OCI-LY7 (cell line): ENCODE measurements at regions of chr11 and their contacts with region 1.

Region 1: DNA sequence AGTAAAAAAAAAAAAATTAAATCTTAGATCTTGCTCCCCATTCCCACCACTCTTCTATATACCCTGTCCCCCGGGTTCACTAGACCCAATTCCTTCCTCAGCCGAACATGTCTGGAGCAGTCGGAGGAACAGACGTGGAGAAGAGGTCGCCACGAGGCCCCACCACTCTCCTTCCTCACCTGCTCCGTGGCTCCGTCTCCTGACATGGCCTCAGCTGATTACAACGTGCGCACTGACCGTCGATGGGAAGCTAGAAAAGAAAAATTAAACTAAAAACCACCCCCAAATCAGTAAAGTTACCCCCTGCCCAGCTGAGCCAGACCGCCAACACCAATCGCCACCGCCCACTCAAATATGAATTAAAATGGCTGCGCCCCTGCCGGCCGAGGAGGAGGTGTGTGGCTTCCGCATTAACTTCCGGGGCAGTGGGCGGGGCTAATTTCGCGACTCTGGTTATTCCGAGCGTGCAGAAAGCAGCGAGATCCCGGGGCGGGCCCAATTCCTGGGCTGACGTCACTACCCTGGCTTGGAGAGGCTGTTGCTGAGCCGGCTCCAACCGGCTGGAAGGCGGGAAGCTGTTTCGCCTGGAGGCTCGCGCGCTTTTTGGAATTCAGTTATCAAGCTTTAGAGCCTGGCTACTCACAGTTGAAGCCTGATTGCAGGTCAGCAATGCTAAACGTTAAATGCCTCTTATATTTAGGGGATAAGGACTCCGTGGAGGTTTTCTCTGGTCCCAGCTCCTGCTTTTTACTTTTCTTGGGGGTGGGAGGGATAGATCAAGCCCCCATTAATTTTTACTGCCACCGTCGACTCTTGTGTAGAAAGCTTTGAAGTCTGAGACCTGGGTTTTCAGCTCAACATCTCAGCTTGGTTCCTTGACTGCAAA is at the start of gene CSTF3:
- DNase-seq: peak; percentile 94
- H3K4me3 ChIP-seq: peak within 1 kb of the TSS; percentile 86
- H3K27ac ChIP-seq: peak within 1 kb of the TSS; percentile 53
- H3K4me1 ChIP-seq: peaks cover 23% of the 10 kb centered on the region
- CTCF ChIP-seq: 0 out of 2 replicates have a peak, but pooled peaks have one; percentile 19
- total RNA-seq, gene CSTF3: 31.9 and 45.1 TPM in 2 replicates

Region 2: GRCh38 chr11:32583459-32584271 is 577.7 kb before region 1 on chr11 and contains the start of gene EIF3M:
- CTCF ChIA-PET with region 1: no interaction called
- POLR2A ChIA-PET with region 1: no interaction called
- intact Hi-C with region 1: loop called (anchors 10 kb)
- DNase-seq: peak; percentile 98
- H3K4me3 ChIP-seq: peak within 1 kb of the TSS; percentile 98
- H3K27ac ChIP-seq: peak within 1 kb of the TSS; percentile 72
- H3K4me1 ChIP-seq: peaks cover 32% of the 10 kb centered on the region
- CTCF ChIP-seq: no peak
- total RNA-seq, gene EIF3M: 377 and 385 TPM in 2 replicates

Region 3: GRCh38 chr11:32987851-32988250 is 173.5 kb before region 1 on chr11:
- CTCF ChIA-PET with region 1: no interaction called
- POLR2A ChIA-PET with region 1: no interaction called
- intact Hi-C with region 1: no loop called
- DNase-seq: no peak
- H3K4me3 ChIP-seq: no peak overlapping the region
- H3K27ac ChIP-seq: no peak overlapping the region
- H3K4me1 ChIP-seq: no peaks in the 10 kb centered on the region
- CTCF ChIP-seq: no peak

Region 4: DNA sequence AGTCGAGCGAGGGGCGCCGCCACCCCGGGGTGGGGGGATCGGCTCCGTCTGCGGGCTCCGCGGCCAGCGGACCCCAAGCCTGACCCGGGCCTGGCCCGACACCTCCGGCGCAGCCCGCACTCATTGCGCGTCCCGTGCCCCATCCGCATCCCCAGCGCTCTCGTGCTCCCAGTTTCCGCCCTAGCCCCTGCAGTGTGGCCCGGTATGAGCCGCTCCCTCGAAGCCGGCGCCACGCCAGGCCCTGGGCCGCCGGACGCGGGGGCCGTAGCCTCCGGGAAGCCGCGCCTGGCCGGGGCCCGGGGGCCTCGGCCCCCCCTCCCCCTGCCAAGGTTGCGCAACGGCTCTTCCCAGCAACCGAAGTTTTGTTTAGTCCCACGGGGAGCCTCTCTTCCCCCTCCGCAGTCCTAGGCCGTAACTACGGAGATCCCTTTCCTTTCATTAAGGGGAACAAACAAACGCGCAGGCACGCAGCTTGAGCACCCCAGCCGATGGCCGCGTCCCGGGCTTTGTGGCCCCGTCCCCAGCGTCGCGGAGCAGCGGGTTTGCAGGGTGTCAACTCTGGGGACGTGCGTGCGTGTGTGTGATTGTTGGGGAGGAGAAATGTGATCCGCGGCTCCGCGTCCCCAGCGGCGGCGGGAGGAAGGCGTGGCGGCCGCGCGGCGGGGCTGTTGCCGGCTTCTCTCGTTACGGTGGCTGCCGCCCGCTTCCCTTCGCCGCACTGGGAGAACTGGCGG is 96.7 kb after region 1 on chr11:
- CTCF ChIA-PET with region 1: no interaction called
- POLR2A ChIA-PET with region 1: no interaction called
- intact Hi-C with region 1: loop called (anchors 1 kb)
- DNase-seq: peak; percentile 84
- H3K4me3 ChIP-seq: peak overlapping the region; percentile 83
- H3K27ac ChIP-seq: peak overlapping the region; percentile 85
- H3K4me1 ChIP-seq: peaks cover 27% of the 10 kb centered on the region
- CTCF ChIP-seq: peak; percentile 43

Region 5: DNA sequence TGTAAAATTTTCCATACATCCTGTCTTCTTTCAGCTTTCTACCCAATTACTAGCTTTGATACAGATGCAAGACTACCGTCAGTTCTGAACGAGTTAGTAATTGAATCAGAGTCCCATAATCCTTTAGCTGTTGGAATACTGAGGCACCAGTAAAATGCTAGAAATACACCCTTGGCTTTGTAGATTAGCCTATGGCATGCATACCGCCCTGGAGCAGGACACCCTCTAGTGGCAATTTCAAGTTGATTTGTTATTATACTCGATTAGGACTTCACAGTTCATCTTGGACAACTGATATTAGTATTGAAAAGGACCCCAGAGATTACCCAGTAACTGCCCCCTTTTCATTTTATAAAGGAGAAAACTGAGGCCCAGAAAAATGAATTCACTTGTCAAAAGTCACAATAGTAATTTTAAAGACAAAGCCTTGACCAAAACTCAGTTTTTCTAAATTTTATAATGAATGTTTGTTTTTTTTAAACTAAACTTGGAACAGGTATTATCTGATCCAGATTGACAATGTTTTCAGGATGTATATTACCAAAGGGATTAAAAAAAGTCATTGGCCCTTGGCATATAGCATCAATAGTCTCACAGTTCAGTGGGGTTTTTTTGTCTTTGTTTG is 168.5 kb after region 1 on chr11:
- CTCF ChIA-PET with region 1: interaction called, 3 read pairs
- POLR2A ChIA-PET with region 1: no interaction called
- intact Hi-C with region 1: loop called (anchors 1 kb)
- DNase-seq: peak; percentile 72
- H3K4me3 ChIP-seq: no peak overlapping the region
- H3K27ac ChIP-seq: no peak overlapping the region
- H3K4me1 ChIP-seq: no peaks in the 10 kb centered on the region
- CTCF ChIP-seq: peak; percentile 95

Region 6: GRCh38 chr11:33542921-33543320 is 381.6 kb after region 1 on chr11:
- CTCF ChIA-PET with region 1: no interaction called
- POLR2A ChIA-PET with region 1: no interaction called
- intact Hi-C with region 1: loop called (anchors 10 kb)
- DNase-seq: peak; percentile 51
- H3K4me3 ChIP-seq: no peak overlapping the region
- H3K27ac ChIP-seq: no peak overlapping the region
- H3K4me1 ChIP-seq: peaks cover 42% of the 10 kb centered on the region
- CTCF ChIP-seq: peak; percentile 82

Region 7: GRCh38 chr11:33687733-33688479 is 526.5 kb after region 1 on chr11:
- CTCF ChIA-PET with region 1: no interaction called
- POLR2A ChIA-PET with region 1: interaction called, 3 read pairs
- intact Hi-C with region 1: loop called (anchors 2 kb)
- DNase-seq: peak; percentile 74
- H3K4me3 ChIP-seq: no peak overlapping the region
- H3K27ac ChIP-seq: no peak overlapping the region
- H3K4me1 ChIP-seq: peaks cover 4% of the 10 kb centered on the region
- CTCF ChIP-seq: peak; percentile 97

Region 8: GRCh38 chr11:33736148-33736809 is 574.9 kb after region 1 on chr11 and contains the start of gene CD59:
- CTCF ChIA-PET with region 1: no interaction called
- POLR2A ChIA-PET with region 1: interaction called, 3 read pairs
- intact Hi-C with region 1: loop called (anchors 5 kb)
- DNase-seq: peak; percentile 83
- H3K4me3 ChIP-seq: peak within 1 kb of the TSS; percentile 86
- H3K27ac ChIP-seq: peak within 1 kb of the TSS; percentile 21
- H3K4me1 ChIP-seq: peaks cover 11% of the 10 kb centered on the region
- CTCF ChIP-seq: no peak
- total RNA-seq, gene CD59: 12.7 and 20.2 TPM in 2 replicates

Region 9: DNA sequence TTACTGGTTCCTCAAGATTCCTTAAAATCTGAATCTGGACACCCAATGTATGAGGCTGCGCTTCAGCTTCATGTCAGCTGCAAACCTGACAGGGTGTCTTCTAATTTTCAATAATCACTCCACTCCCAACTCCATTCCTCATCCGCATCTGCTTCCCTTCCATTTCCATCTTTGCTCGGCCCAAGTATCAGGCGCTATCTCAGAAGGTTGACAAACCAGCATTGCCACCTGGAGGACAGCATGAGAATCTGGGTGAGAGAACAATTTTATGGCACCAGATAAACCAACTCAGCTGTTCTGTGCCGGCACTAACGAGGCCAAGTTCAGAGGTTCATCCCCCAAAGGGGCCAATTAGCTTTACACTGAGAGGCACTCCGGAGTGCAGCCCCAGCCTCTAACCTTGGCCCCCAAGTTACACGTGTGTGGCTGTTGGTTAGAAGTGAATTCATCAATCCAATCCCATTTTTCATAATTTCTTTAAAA is 809.7 kb after region 1 on chr11:
- CTCF ChIA-PET with region 1: no interaction called
- POLR2A ChIA-PET with region 1: no interaction called
- intact Hi-C with region 1: no loop called
- DNase-seq: peak; percentile 43
- H3K4me3 ChIP-seq: no peak overlapping the region
- H3K27ac ChIP-seq: no peak overlapping the region
- H3K4me1 ChIP-seq: no peaks in the 10 kb centered on the region
- CTCF ChIP-seq: peak; percentile 78